ENCODE measurements at regions of chr3 and their contacts with region 1.

Region 1: DNA sequence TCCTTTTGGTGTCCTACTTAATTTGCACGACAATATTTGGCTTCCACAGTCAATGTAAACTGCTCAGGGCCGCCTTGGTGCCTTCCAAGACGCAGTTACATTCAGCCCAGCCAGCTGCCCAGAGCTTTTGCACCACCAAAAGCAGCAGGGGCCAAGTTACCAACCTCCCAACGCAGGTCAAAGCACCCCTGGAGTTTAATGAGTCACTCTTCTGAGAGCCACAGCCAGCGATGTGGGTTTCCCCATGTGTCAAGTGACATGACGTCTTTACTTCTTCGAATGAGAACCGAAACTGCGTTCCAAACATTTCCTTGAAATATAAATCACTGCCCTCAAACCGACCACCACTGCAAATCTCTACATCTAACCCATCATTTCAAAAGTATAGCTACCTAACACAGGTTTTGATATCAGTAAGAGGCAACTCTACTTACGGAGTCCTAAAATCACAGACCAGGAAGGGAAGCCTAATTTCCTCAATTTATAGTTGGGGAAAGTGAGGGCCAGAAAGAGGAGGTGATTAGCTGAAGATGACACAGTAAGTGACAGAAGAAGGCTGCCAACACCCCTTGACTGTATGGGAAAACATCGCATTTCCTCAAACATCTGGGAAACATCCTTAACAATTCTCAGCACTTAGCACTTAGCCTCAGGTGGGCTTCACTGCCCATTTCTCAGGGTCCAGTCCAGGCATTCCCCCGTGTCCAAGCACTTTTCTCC is 24.5 kb downstream of the MB21D2 start:
- DNase-seq: peak; percentile 75
- CTCF ChIP-seq: no peak

Region 2: DNA sequence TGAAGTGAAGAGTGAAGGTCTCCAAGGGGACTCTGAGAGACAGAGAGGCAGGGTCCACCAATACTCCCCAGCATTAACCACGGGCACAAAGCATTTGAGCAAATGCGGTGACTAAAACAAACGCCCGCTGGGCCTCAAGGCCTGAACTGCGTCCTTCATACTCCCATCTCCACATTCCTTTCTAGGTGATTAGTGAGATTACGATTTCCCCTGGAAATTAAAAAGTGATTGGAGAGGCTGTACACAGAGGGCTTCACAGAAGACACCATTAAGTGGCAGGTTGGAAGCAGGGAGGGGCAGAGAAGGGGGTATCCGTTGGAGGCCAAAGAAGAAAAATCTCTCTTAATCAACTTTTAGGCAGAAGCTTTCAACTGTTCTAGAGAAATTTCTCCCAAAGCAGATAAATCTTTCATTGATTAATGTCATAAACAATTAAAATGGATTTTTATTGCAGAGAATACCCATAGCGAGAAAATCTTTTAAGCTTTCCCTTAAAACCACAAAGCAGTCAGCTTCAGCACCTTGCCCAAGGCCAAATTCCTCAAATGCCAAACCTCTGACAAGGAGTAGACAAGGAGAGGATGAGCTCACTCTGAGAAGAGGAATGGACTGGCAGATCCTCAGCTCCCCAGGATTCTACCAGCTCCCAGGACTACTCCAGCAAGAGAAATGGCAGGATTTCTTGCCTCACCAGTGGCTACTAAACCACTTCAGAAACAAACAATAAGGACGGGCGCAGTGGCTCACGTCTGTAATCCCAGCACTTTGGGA is 13.6 kb before region 1 on chr3:
- CTCF ChIA-PET with region 1: interaction called, 23 read pairs
- POLR2A ChIA-PET with region 1: interaction called, 6 read pairs
- DNase-seq: no peak
- CTCF ChIP-seq: no peak

Region 3: GRCh38 chr3:193157051-193157450 is 263.9 kb after region 1 on chr3:
- CTCF ChIA-PET with region 1: no interaction called
- POLR2A ChIA-PET with region 1: no interaction called
- DNase-seq: peak; percentile 1
- CTCF ChIP-seq: no peak

Region 4: DNA sequence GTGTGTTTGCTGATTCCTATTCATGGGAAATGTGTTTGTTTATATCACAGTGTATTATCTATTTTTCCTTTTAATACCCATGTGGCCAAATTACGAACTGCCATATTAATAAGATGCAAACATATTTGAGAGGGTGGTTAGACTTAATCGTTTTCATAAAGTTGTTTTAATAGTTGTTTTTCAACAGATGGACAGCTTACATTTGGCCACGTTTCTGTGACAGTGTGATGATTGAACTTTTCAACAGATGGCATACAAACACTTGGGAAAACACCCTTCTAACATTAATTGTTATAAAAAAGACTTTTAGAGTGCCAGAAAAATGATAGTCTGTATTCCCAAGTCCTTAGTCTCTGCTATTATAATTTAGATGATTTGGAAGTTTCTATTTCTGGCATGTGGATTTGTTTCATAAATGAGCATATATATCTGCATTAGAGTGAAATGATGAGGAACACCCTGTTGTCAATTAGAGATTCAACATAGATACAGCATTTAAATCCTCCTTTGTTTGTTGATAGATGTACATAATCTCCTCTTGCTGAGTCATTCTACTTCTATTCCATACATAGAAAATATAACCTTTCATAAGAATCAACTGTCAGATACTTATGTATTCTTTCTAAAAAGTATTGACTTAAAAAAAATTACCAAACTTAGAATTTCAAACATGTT is 361.0 kb after region 1 on chr3:
- CTCF ChIA-PET with region 1: no interaction called
- POLR2A ChIA-PET with region 1: no interaction called
- DNase-seq: no peak
- CTCF ChIP-seq: no peak